ENCODE measurements at regions of chr5 and their contacts with region 1.

Region 1: GRCh38 chr5:57488215-57488955 is 5.8 kb upstream of the ACTBL2 start:
- DNase-seq: peak; percentile 91
- H3K4me3 ChIP-seq: no peak overlapping the region
- H3K27ac ChIP-seq: peak overlapping the region; percentile 90
- H3K4me1 ChIP-seq: peaks cover 51% of the 10 kb centered on the region
- H3K27me3 ChIP-seq: no peaks in the 10 kb centered on the region
- CTCF ChIP-seq: no peak
- POLR2A ChIP-seq: peak; percentile 52

Region 2: GRCh38 chr5:57442080-57442839 is 46.1 kb before region 1 on chr5:
- CTCF ChIA-PET with region 1: interaction called, 4 read pairs
- POLR2A ChIA-PET with region 1: no interaction called
- dilution Hi-C with region 1: no loop called
- intact Hi-C with region 1: loop called (anchors 1 kb)
- DNase-seq: peak; percentile 73
- H3K4me3 ChIP-seq: no peak overlapping the region
- H3K27ac ChIP-seq: peak overlapping the region; percentile 83
- H3K4me1 ChIP-seq: peaks cover 55% of the 10 kb centered on the region
- H3K27me3 ChIP-seq: no peaks in the 10 kb centered on the region
- CTCF ChIP-seq: no peak
- POLR2A ChIP-seq: no peak

Region 3: GRCh38 chr5:57513785-57514184 is 25.4 kb after region 1 on chr5:
- CTCF ChIA-PET with region 1: no interaction called
- POLR2A ChIA-PET with region 1: no interaction called
- dilution Hi-C with region 1: no loop called
- intact Hi-C with region 1: no loop called
- DNase-seq: no peak
- H3K4me3 ChIP-seq: no peak overlapping the region
- H3K27ac ChIP-seq: no peak overlapping the region
- H3K4me1 ChIP-seq: no peaks in the 10 kb centered on the region
- H3K27me3 ChIP-seq: no peaks in the 10 kb centered on the region
- CTCF ChIP-seq: no peak
- POLR2A ChIP-seq: no peak

Measured in endothelial cell of umbilical vein (primary cell).